ENCODE measurements at regions of chr1 and their contacts with region 1.

Region 1: DNA sequence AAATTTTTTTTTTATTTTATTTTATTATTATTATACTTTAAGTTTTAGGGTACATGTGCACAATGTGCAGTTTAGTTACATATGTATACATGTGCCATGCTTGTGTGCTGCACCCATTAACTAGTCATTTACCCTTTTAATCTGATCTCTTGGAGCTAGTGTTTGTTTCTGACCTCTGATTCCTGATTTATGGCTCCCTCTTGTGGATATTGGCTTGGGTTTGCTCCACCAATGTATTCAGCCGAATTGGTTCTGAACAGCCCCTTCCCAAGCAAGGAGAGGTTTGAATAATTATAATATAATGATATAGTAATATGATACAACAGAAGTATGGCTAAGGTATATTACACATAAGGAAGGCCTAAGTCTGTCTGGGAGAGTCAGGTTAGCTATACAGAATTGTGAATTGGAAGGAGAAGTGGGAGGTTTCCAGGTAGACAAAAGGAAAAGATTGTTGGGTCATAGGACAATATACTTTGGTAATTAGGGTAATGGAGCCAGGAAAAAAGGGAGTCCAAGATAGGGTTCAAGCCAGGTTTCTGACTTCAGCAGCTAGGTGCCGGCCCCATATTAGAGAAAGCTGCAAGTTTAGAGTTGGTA is 53.1 kb upstream of the HMCN1 start:
- DNase-seq: peak; percentile 55 to 65 (median 61)
- H3K4me3 ChIP-seq: no peak overlapping the region
- H3K27ac ChIP-seq: no peak overlapping the region
- H3K4me1 ChIP-seq: peaks cover 0 to 11% (median 7%) of the 10 kb centered on the region in 4 experiments
- H3K27me3 ChIP-seq: no peaks in the 10 kb centered on the region

Region 2: DNA sequence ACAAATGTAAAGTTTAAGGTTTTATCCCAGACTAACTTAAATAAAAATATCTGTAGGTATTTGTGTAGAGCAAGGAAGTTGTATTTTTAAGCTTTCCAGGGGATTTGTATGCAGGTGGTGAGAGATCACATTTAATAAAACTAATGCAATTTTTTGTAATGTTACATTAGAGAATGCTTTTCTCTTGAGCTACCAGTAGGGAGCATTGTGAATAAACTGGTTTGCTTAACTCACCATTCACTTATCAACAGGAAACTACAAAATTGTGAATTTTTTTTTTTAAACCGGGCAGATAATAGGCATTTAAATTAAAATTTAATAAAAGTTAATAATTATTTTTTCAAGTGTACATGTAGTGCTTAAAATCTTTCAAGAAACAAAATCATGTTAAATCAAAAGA is 442.7 kb before region 1 on chr1:
- CTCF ChIA-PET with region 1: interaction called, 19 read pairs
- POLR2A ChIA-PET with region 1: no interaction called
- DNase-seq: peak; percentile 22 to 50 (median 33)
- H3K4me3 ChIP-seq: no peak overlapping the region
- H3K27ac ChIP-seq: no peak overlapping the region
- H3K4me1 ChIP-seq: no peaks in the 10 kb centered on the region
- H3K27me3 ChIP-seq: no peaks in the 10 kb centered on the region

Region 3: GRCh38 chr1:185317034-185317885 is 363.9 kb before region 1 on chr1 and contains the start of gene IVNS1ABP:
- CTCF ChIA-PET with region 1: interaction called, 9 read pairs
- POLR2A ChIA-PET with region 1: interaction called, 10 read pairs
- DNase-seq: peak; percentile 94 to 98 (median 97)
- H3K4me3 ChIP-seq: peak within 1 kb of the TSS; percentile 69 to 98 (median 94)
- H3K27ac ChIP-seq: peak within 1 kb of the TSS; percentile 86 to 93
- H3K4me1 ChIP-seq: peaks cover 24 to 40% (median 40%) of the 10 kb centered on the region in 4 experiments
- H3K27me3 ChIP-seq: no peaks in the 10 kb centered on the region

Region 4: DNA sequence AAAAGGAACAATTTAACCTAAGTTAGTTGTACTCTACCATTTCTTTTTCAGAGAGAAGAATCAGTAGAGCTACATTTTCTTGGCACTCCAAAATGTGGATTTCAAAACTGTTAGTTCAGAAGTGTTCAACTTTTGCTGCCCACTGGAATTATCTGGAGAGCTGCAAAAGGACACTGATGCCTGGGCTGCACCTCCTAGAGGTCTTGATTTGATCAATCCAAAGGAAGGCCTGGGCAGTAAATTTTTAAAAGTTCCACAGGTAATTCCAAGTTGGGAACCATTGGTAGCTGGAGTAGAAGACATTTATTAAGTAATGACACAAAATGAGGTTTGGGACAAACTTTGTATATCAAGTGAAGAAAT is 26.2 kb before region 1 on chr1:
- CTCF ChIA-PET with region 1: no interaction called
- POLR2A ChIA-PET with region 1: no interaction called
- DNase-seq: no peak
- H3K4me3 ChIP-seq: no peak overlapping the region
- H3K27ac ChIP-seq: no peak overlapping the region
- H3K4me1 ChIP-seq: no peaks in the 10 kb centered on the region
- H3K27me3 ChIP-seq: no peaks in the 10 kb centered on the region

Region 5: GRCh38 chr1:185917646-185918045 is 236.5 kb after region 1 on chr1:
- CTCF ChIA-PET with region 1: no interaction called
- POLR2A ChIA-PET with region 1: no interaction called
- DNase-seq: no peak
- H3K4me3 ChIP-seq: no peak overlapping the region
- H3K27ac ChIP-seq: no peak overlapping the region
- H3K4me1 ChIP-seq: no peaks in the 10 kb centered on the region
- H3K27me3 ChIP-seq: peaks cover 0 to 2% (median 0%) of the 10 kb centered on the region in 5 experiments

Measured in common myeloid progenitor, CD34-positive (primary cell).